Activated CD4-positive, alpha-beta memory T cell treated with anti-CD3 and anti-CD28 coated beads for 36 hours (primary cell): ENCODE measurements at regions of chr2 and their contacts with region 1.

Region 1: GRCh38 chr2:37156857-37157714 is at the start of gene EIF2AK2:
- DNase-seq: peak; percentile 88
- H3K4me3 Mint-ChIP-seq: peak within 1 kb of the TSS; percentile 80
- H3K27ac Mint-ChIP-seq: peak within 1 kb of the TSS; percentile 74
- H3K4me1 Mint-ChIP-seq: peaks cover 34% of the 10 kb centered on the region
- H3K27me3 Mint-ChIP-seq: no peaks in the 10 kb centered on the region
- total RNA-seq, gene EIF2AK2: 48.1 to 52.6 TPM

Region 2: DNA sequence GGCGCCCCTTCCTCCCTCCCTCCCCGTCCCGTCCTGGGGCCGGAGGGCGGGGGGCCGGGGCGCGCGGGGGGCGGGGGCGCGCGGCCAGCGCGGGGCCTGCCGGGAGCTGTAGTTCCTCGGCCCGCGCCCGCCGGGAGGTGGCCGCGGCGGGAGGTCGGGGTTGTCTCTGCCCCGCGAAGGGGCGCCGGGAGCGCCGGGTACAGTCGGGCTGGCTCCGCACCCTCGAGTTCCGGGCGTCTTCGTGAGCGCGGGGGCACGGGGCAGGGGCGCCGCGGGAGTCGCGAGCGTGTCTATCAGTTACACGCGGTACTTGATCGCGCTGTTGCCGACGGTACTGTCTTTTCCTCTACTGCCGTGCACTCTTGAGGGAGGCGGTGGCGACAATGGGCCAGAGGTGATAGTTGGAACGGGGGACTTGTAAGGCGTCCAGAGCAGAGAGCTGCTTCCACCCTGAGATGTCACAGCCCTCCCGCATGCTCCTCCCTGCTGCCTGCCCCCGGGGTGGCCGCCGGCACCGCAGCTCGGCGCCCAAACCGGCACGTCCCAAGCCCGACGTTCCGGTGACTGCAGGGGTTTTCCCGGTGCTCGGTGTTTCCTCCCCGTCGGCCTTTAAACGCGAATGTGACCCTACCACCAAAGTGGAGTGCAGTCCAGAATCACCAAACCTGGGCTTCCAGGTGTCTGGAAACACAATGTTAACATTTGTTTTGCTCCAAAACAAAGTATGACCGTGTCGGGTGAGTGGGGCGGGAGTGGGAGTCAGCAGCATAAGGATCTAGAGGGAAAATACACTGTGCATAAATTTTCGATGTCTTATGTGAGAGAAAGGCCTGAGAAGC is 167.9 kb after region 1 on chr2 and contains the start of gene PRKD3:
- CTCF ChIA-PET with region 1: no interaction called
- POLR2A ChIA-PET with region 1: no interaction called
- intact Hi-C with region 1: loop called (anchors 5 kb)
- DNase-seq: peak; percentile 77
- H3K4me3 Mint-ChIP-seq: peak within 1 kb of the TSS; percentile 94
- H3K27ac Mint-ChIP-seq: peak within 1 kb of the TSS; percentile 89
- H3K4me1 Mint-ChIP-seq: peaks cover 37% of the 10 kb centered on the region
- H3K27me3 Mint-ChIP-seq: peaks cover 16% of the 10 kb centered on the region
- total RNA-seq, gene PRKD3: 22.5 to 24.7 TPM

Region 3: DNA sequence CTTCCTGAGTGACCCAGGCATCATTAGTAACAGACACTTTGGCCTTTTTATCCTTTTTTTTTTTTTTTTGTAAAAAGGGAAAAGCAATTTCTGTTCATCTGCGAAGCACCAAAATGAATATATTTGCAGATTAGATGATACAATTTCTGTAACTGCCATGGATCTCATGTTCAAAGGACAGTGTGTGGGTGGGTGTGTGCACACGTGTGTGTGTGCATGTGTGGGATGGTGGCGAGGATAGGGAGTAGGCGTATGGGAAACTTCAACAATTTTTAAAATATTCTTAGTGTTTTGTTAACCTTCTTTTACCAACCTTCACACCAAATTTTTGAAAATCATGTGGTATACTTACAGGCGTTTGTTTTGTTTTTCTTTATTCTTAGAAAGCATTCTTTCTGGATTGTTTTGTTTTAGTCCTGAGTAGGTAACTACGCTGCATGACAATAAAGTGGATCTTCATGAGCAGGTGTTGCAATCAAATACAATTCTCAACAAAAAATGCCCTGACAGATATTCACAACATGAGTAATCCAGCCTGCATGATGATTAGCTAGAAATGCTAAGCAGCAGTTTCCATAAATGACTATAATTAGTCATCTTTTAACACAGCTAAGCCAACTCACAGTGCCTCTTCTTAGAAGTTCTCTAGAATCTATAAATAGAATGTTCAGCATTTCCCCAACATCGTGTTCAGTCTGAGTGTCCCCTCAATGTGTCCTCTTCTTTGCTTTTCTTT is 714.5 kb after region 1 on chr2:
- CTCF ChIA-PET with region 1: no interaction called
- POLR2A ChIA-PET with region 1: no interaction called
- intact Hi-C with region 1: loop called (anchors 5 kb)
- DNase-seq: no peak
- H3K4me3 Mint-ChIP-seq: peak overlapping the region; percentile 38
- H3K27ac Mint-ChIP-seq: peak overlapping the region; percentile 93
- H3K4me1 Mint-ChIP-seq: peaks cover 27% of the 10 kb centered on the region
- H3K27me3 Mint-ChIP-seq: no peaks in the 10 kb centered on the region

Region 4: DNA sequence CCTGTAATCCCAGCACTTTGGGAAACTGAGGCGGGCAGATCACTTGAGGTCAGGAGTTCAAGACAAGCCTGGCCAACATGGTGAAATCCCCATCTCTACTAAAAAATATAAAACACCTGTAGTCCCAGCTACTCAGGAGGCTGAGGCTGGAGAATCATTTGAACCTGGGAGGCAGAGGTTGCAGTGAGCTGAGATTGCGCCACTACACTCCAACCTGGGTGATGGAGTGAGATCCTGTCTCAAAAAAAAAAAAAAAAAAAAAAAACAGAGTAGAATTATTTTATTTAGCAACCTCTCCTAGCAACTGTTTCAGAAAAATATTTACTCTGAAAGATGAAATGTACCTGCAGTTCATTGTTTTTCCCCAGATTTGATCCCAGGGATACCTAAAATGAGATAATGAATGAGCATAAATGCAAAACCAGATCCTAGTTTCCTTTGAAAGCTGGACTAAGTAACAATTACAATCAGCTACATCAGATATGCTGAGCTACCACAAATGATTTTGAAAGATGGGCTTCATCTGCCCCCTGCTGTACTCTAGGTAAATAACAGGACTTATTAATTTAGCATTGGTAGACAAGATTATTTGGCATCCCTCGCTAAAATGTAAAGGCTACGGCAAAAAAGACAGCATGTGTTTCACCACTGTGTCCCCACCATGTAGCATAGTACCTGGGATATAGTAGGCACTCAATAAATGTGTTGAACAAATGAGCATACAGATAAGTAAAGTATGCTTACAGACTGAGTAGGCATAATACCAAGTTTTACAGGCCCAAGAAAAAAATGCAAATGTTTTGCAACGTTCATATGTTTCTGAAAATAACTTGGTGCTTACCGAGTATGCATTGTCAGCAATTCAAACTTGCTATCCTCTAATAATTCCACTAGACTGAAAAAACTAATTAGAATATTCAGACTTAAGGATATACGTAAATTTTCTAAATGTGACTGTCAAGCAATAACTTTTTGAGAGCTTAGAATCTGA is 1117.5 kb after region 1 on chr2:
- CTCF ChIA-PET with region 1: no interaction called
- POLR2A ChIA-PET with region 1: no interaction called
- intact Hi-C with region 1: no loop called
- DNase-seq: peak; percentile 22
- H3K4me3 Mint-ChIP-seq: no peak overlapping the region
- H3K27ac Mint-ChIP-seq: no peak overlapping the region
- H3K4me1 Mint-ChIP-seq: peaks cover 4% of the 10 kb centered on the region
- H3K27me3 Mint-ChIP-seq: peaks cover 1% of the 10 kb centered on the region